PC-3 (cell line): ENCODE measurements at regions of chr2 and their contacts with region 1.

Region 1: GRCh38 chr2:106582148-106583143 is 95.3 kb downstream of the CD8B2 start:
- DNase-seq: peak; percentile 84
- ATAC-seq: peak; percentile 93
- H3K4me3 ChIP-seq: peak overlapping the region; percentile 35; the same call in 1 of the 2 replicates
- H3K27ac ChIP-seq: no peak overlapping the region
- H3K4me1 ChIP-seq: no peaks in the 10 kb centered on the region
- H3K27me3 ChIP-seq: peaks cover 46% of the 10 kb centered on the region
- CTCF ChIP-seq: peak; percentile 83

Region 2: GRCh38 chr2:106542811-106543259 is 39.6 kb before region 1 on chr2:
- CTCF ChIA-PET with region 1: interaction called, 5 read pairs
- POLR2A ChIA-PET with region 1: no interaction called
- intact Hi-C with region 1: loop called (anchors 2 kb)
- DNase-seq: peak; percentile 83
- ATAC-seq: peak; percentile 89
- H3K4me3 ChIP-seq: peak overlapping the region; percentile 70
- H3K27ac ChIP-seq: no peak overlapping the region
- H3K4me1 ChIP-seq: no peaks in the 10 kb centered on the region
- H3K27me3 ChIP-seq: peaks cover 59% of the 10 kb centered on the region
- CTCF ChIP-seq: peak; percentile 83

Region 3: DNA sequence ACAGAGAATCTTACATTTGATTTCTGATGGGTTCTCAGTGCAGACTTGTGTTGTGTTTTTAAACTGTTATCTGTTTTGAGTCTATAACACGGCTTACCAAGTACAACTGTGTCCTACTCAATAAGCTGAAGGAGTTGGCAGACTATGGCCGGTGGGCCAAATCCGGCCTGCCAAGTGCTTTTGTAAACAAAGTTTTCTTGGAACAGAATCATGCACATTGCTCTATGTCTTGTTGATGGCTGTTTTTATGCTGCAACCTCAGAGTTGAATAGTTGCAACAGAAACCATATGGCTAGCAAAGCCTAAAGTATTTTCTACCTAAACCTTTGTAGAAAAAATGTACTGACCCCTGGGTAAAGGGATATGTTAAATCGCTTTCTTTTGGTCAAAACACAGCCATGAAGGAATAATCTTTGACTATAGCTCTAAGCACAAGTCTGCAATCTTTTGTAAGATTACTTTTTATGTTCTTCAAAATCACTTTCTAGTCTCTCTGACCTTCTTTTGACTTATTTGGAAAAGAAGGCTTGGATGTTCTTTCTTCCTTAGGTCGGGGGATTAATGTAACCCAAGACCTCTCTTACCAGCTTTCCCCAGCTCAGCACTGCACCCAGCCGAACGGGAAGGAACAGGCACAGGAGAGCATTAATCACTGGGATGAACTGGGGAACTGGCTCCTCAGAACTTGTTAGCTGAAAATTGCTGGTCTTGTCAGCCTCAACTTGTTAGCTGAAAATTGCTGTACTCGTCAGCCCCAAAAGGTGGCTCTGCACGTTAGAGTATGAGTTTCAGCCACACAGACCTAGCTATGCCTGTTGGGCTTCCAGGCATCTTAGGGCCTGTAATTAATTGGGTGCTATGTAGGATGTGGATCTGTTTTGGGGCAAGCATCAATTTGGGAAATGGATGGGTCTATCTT is 19.9 kb before region 1 on chr2:
- CTCF ChIA-PET with region 1: interaction called, 17 read pairs
- POLR2A ChIA-PET with region 1: no interaction called
- intact Hi-C with region 1: no loop called
- DNase-seq: no peak
- ATAC-seq: no peak; the same call in 1 of the 2 replicates
- H3K4me3 ChIP-seq: no peak overlapping the region
- H3K27ac ChIP-seq: no peak overlapping the region
- H3K4me1 ChIP-seq: no peaks in the 10 kb centered on the region
- H3K27me3 ChIP-seq: peaks cover 70% of the 10 kb centered on the region
- CTCF ChIP-seq: no peak